Activated naive CD4-positive, alpha-beta T cell treated with anti-CD3 and anti-CD28 coated beads, Interleukin-2, amount 10 ng/mL, durations not matched to agents 7 days and 5 days (primary cell): ENCODE measurements at regions of chr6 and their contacts with region 1.

Region 1: DNA sequence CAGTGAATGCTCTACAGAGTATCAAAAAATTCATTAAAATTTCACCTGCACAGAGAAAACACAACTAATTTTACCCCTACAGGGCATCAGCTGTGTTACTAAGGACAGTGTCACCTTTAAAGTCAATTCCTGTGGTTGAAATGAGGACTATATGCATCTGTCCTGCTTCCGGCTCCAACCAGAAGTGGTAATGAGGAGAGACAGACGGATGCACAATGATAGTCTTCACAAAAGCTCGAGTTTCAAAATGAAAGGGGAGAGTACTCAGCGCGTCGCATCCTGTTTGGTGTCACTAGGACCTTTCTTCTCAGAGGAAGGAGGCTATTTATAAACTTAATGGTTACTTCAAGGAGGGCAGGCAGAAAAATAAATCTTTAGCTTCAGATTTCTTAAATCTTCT is 86.5 kb downstream of the LYRM4 start:
- DNase-seq: peak; percentile 85
- H3K4me3 Mint-ChIP-seq: peak overlapping the region; percentile 43
- H3K27ac Mint-ChIP-seq: peak overlapping the region; percentile 94
- H3K4me1 Mint-ChIP-seq: peaks cover 76% of the 10 kb centered on the region
- H3K27me3 Mint-ChIP-seq: no peaks in the 10 kb centered on the region

Region 2: GRCh38 chr6:5159148-5159547 is 15.1 kb before region 1 on chr6:
- CTCF ChIA-PET with region 1: interaction called, 15 read pairs
- DNase-seq: no peak
- H3K4me3 Mint-ChIP-seq: no peak overlapping the region
- H3K27ac Mint-ChIP-seq: no peak overlapping the region
- H3K4me1 Mint-ChIP-seq: peaks cover 6% of the 10 kb centered on the region
- H3K27me3 Mint-ChIP-seq: no peaks in the 10 kb centered on the region